H1 (cell line): ENCODE measurements at regions of chr1 and their contacts with region 1.

Region 1: GRCh38 chr1:155244368-155245162 is 10.7 kb downstream of the ENTREP3 start:
- DNase-seq: peak; percentile 96 to 97
- H3K4me3 ChIP-seq: peak overlapping the region; percentile 50 to 58 (median 56)
- H3K27ac ChIP-seq: peak overlapping the region; percentile 79
- H3K4me1 ChIP-seq: peaks cover 0 to 4% (median 1%) of the 10 kb centered on the region in 4 experiments; a peak in 2 of 7 replicates
- H3K27me3 ChIP-seq: peaks cover 0 to 14% (median 4%) of the 10 kb centered on the region in 4 experiments; a peak in 2 of 7 replicates
- CTCF ChIP-seq: peak in 2 of 3 experiments; percentile 20 to 21; a peak in 2 of 4 replicates
- EP300 ChIP-seq: peak in 1 of 2 experiments; percentile 76; a peak in 1 of 3 replicates
- POLR2A ChIP-seq: peak; percentile 79 to 96
- RAD21 ChIP-seq: peak in 1 of 2 experiments; percentile 24; a peak in 2 of 4 replicates

Region 2: DNA sequence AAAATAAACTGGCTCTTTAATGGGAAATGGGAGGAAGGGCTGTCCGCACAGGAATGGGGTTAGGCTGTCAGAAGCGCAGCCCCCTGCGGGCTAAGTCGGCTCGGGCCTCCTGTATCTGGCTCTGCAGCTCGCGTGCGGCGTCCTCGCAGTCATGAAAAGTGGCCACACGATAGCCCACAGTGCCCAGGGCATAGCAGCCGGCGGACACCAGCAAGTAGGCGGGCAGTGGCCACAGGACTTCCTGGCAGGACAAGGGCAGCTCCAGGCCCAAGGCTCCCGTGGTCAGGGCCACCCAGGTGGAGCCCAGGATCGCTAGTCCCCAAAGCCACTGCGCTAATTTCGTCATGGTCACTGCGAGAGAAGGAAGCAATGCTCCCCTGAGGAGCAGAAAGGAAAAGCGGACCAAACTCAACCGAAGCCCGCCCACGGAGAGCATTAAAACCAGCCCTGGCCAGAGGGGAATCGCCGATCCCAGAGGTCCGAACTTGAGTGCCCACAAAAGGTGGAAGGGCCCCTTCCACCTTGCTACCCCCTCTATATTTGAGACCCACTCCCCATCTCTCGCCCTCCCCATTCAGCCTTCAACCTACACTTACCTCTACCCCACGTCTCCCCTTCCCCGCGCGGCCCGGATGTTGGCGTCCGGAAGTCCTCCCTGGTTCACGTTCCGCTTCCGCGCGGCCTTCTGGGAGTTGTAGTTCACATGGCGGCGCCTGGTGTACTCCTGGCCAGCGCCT is 104.5 kb before region 1 on chr1 and contains the start of gene DPM3:
- CTCF ChIA-PET with region 1: no interaction called
- POLR2A ChIA-PET with region 1: no interaction called
- DNase-seq: peak in 1 of 2 experiments; percentile 90
- H3K4me3 ChIP-seq: peak within 1 kb of the TSS; percentile 70 to 96 (median 92)
- H3K27ac ChIP-seq: peak within 1 kb of the TSS; percentile 28; the same call in 1 of the 2 replicates
- H3K4me1 ChIP-seq: peaks cover 0 to 8% (median 7%) of the 10 kb centered on the region in 4 experiments; a peak in 4 of 7 replicates
- H3K27me3 ChIP-seq: no peaks in the 10 kb centered on the region
- CTCF ChIP-seq: no peak; a peak in 1 of 4 replicates
- EP300 ChIP-seq: no peak
- POLR2A ChIP-seq: no peak; a peak in 1 of 3 replicates
- RAD21 ChIP-seq: no peak
- total RNA-seq, gene DPM3: 44.8 and 49.3 TPM in 2 replicates

Region 3: DNA sequence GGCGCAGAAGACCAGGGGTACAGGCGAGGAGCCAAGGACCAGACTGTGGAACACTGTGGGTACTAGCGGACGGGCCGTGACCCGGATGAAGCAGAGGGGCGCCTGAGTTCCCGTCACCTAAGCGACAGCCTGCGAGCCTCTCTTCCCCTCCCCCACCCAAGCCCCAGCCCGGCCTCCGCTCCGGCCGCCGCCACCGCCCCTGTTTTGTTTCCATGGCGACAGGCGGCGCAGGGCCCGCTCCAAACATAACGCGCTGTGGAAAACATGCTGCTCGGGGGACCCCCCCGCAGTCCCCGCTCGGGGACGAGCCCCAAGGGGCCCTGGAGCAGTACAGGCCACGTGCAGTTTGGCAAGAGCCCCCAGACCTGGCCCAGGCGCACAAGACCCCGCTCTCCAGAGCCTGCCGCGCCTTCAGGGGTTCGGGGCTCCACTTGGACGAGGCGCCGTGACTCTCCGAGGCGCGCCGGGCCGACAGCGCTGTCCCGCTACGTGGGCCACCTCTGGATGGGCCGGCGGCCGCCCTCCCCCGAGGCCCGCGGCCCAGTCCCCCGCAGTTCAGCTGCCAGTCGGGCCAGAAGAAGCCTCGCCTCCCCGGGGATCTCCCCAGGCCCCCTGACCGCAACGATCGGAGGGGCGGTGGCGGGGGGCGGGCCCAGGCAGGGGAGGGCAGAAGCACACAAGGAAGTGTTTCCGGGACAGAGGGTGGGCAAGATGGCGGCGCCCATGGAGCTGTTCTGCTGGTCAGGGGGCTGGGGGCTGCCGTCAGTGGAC is 35.8 kb before region 1 on chr1 and contains the start of gene MTX1:
- CTCF ChIA-PET with region 1: interaction called, 37 read pairs
- POLR2A ChIA-PET with region 1: interaction called, 20 read pairs
- DNase-seq: peak in 1 of 2 experiments; percentile 90
- H3K4me3 ChIP-seq: peak within 1 kb of the TSS; percentile 86 to 95 (median 94)
- H3K27ac ChIP-seq: peak within 1 kb of the TSS; percentile 85
- H3K4me1 ChIP-seq: peaks cover 3 to 20% (median 12%) of the 10 kb centered on the region in 4 experiments
- H3K27me3 ChIP-seq: peaks cover 0 to 3% (median 0%) of the 10 kb centered on the region in 4 experiments; a peak in 2 of 7 replicates
- CTCF ChIP-seq: no peak
- EP300 ChIP-seq: peak in 1 of 2 experiments; percentile 86; a peak in 1 of 3 replicates
- POLR2A ChIP-seq: peak in 1 of 2 experiments; percentile 74; a peak in 2 of 3 replicates
- RAD21 ChIP-seq: no peak
- total RNA-seq, gene MTX1: 47.9 and 55.0 TPM in 2 replicates

Region 4: DNA sequence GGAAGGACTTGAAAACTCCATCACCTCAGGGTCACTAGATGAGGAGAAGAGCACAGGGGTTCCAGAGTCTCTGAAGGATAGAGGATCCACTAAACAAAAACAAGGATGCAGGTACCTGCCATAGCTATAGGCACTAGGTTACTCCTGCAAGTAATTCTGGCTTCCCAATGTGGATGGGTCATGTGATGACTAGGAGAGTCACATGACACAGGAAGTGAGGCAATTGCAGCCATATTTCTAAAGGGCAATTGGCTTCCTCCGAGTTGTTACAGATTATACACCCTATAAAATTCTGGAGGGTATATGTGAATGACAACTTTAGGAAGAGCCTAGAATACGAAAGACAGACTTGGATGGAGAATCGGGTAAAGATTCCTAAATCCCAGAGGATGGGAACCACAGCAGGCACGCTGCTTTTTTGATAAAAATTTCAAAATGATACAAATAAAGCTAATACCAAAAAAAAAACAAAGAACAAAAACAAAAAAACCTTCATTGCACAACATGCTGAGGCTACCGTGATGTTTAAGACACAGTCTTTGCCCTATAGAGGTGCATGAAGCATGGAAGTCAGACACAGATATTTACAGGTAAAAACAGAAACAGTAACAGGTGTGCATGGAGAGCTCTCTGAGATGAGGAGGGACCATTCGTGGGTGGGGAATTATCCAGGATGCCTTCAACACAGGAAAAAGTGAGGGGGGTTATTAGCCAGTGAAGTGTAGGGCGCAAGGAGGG is 25.5 kb before region 1 on chr1:
- CTCF ChIA-PET with region 1: interaction called, 3 read pairs
- POLR2A ChIA-PET with region 1: interaction called, 10 read pairs
- DNase-seq: peak in 1 of 2 experiments; percentile 69
- H3K4me3 ChIP-seq: peak overlapping the region in 2 of 4 experiments; percentile 20 to 21; a peak in 2 of 8 replicates
- H3K27ac ChIP-seq: no peak overlapping the region
- H3K4me1 ChIP-seq: peaks cover 0 to 7% (median 0%) of the 10 kb centered on the region in 4 experiments; a peak in 1 of 7 replicates
- H3K27me3 ChIP-seq: no peaks in the 10 kb centered on the region
- CTCF ChIP-seq: no peak
- EP300 ChIP-seq: peak in 1 of 2 experiments; percentile 61; a peak in 1 of 3 replicates
- POLR2A ChIP-seq: no peak
- RAD21 ChIP-seq: no peak

Region 5: GRCh38 chr1:155227261-155228095 is 17.1 kb before region 1 on chr1:
- CTCF ChIA-PET with region 1: interaction called, 7 read pairs
- POLR2A ChIA-PET with region 1: interaction called, 17 read pairs
- DNase-seq: peak; percentile 95 to 96
- H3K4me3 ChIP-seq: peak overlapping the region; percentile 67 to 92 (median 82)
- H3K27ac ChIP-seq: peak overlapping the region; percentile 91
- H3K4me1 ChIP-seq: peaks cover 0 to 14% (median 4%) of the 10 kb centered on the region in 4 experiments; a peak in 5 of 7 replicates
- H3K27me3 ChIP-seq: peaks cover 0 to 2% (median 0%) of the 10 kb centered on the region in 4 experiments; a peak in 1 of 7 replicates
- CTCF ChIP-seq: peak in 2 of 3 experiments; percentile 14 to 17; a peak in 2 of 4 replicates
- EP300 ChIP-seq: no peak
- POLR2A ChIP-seq: peak; percentile 76 to 91
- RAD21 ChIP-seq: no peak

Region 6: GRCh38 chr1:155261852-155262673 is 17.5 kb after region 1 on chr1 and contains the start of gene SCAMP3:
- CTCF ChIA-PET with region 1: interaction called, 63 read pairs
- POLR2A ChIA-PET with region 1: interaction called, 48 read pairs
- DNase-seq: peak; percentile 90 to 95
- H3K4me3 ChIP-seq: peak within 1 kb of the TSS; percentile 71 to 89 (median 76)
- H3K27ac ChIP-seq: peak within 1 kb of the TSS; percentile 27; the same call in 1 of the 2 replicates
- H3K4me1 ChIP-seq: peaks cover 0 to 8% (median 4%) of the 10 kb centered on the region in 4 experiments; a peak in 3 of 7 replicates
- H3K27me3 ChIP-seq: no peaks in the 10 kb centered on the region
- CTCF ChIP-seq: no peak
- EP300 ChIP-seq: no peak
- POLR2A ChIP-seq: peak; percentile 59 to 94
- RAD21 ChIP-seq: no peak
- total RNA-seq, gene SCAMP3: 48.9 and 50.0 TPM in 2 replicates

Region 7: DNA sequence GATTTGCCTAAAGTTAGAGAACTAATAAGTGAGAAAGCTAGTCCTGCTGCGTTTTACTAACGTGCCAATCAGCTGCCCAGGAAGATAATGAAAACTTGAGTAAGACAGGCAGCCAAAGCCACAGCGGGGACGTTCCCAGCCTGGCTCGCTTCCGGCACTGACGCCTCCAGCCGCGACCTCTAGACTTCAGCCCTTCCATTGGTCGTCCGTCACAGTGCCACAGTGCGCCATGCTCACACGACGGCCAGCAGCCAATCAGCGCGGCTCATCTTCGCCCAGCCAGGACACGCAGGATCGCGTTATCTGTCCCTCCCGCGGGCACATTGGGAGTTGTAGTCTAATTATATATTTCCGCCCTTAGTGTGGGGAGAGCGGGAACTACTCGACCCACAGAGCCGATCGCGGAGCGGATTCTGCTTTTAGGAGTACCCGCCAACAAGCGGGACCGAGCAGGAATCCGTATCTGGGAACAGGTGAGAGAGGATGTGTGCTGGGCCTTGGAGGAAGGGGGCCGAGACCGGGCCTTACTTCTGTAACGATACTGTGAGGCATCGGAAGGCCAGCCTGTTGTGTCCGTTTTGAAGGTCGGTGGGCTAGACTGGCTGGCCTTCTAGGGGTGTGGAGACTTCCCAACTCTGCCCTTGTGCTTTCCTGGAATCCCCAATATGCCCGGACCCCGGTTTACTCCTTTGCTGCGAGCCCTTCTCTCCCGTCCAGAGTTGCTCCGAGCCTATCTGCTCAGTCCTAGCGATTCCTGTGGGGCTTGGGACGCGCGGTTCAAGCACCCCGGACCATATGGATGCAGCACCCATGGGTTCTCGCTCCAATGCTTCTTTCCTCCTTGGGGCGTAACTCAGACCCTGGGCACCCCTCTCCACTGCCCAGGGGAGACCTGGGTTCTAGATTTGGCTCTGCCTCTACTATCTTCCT is 64.2 kb after region 1 on chr1 and contains the start of gene FDPS:
- CTCF ChIA-PET with region 1: interaction called, 103 read pairs
- POLR2A ChIA-PET with region 1: no interaction called
- DNase-seq: peak; percentile 89 to 97
- H3K4me3 ChIP-seq: peak within 1 kb of the TSS; percentile 79 to 100 (median 89)
- H3K27ac ChIP-seq: peak within 1 kb of the TSS; percentile 65
- H3K4me1 ChIP-seq: peaks cover 0 to 8% (median 4%) of the 10 kb centered on the region in 4 experiments; a peak in 6 of 7 replicates
- H3K27me3 ChIP-seq: no peaks in the 10 kb centered on the region; a peak in 1 of 7 replicates
- CTCF ChIP-seq: 0 out of 4 replicates have a peak, but pooled peaks of 1 of the 3 experiments have one; percentile 7
- EP300 ChIP-seq: no peak
- POLR2A ChIP-seq: peak; percentile 85 to 91
- RAD21 ChIP-seq: 0 out of 4 replicates have a peak, but pooled peaks of 1 of the 2 experiments have one; percentile 6
- total RNA-seq, gene FDPS: 368 and 370 TPM in 2 replicates